Stomach (tissue), 19 donors: ENCODE measurements at regions of chr13 and their contacts with region 1.

Region 1: DNA sequence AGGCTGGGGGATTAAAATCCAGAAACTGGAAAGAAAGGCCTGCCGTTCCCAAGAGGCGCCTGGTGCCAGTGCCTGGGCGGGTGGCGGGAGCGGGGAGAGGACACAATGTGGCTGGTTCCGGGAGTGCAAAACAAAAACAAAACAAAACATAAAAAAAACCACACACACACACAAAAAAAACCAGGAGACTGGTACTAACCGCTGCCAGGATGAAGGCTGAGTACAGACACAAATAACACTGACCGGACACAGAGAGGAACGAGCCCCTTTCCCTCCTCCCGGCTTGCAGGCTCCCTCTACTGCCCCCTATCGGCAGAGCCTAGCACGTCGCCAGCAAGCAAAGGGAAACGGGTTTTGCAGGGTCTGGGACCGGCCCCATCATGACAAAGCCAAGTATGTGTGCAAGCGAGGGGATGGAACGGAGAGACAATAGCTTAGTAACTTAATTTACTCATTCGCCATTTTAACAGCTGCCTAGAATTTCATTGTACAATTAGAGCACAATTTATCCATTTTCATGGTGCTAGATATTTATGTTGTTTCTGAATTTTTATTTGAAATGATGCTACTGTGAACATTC is 17.9 kb upstream of the ZDHHC20 start:
- DNase-seq: peak; percentile 89 to 95
- H3K4me3 ChIP-seq: peak overlapping the region; percentile 31 to 37 (median 35)
- H3K27ac ChIP-seq: peak overlapping the region; percentile 28 to 77 (median 70)
- H3K4me1 ChIP-seq: peaks cover 0 to 24% (median 11%) of the 10 kb centered on the region in 4 donors
- H3K27me3 ChIP-seq: no peaks in the 10 kb centered on the region
- CTCF ChIP-seq: peak in 6 of 7 experiments; percentile 58 to 96 (median 95)
- EP300 ChIP-seq: no peak
- POLR2A ChIP-seq: no peak

Region 2: GRCh38 chr13:20945952-20946383 is 531.0 kb before region 1 on chr13:
- intact Hi-C with region 1: loop called (anchors 10 kb)
- DNase-seq: peak in 1 of 2 donors; percentile 54
- H3K4me3 ChIP-seq: peak overlapping the region in 3 of 4 donors; percentile 19 to 26 (median 25)
- H3K27ac ChIP-seq: no peak overlapping the region
- H3K4me1 ChIP-seq: peaks cover 7 to 21% (median 13%) of the 10 kb centered on the region in 4 donors
- H3K27me3 ChIP-seq: peaks cover 0 to 17% (median 10%) of the 10 kb centered on the region in 3 donors
- CTCF ChIP-seq: no peak
- EP300 ChIP-seq: no peak
- POLR2A ChIP-seq: no peak

Region 3: GRCh38 chr13:21106089-21106488 is 370.9 kb before region 1 on chr13:
- intact Hi-C with region 1: loop called (anchors 10 kb)
- DNase-seq: peak in 1 of 2 donors; percentile 32
- H3K4me3 ChIP-seq: no peak overlapping the region
- H3K27ac ChIP-seq: no peak overlapping the region
- H3K4me1 ChIP-seq: no peaks in the 10 kb centered on the region
- H3K27me3 ChIP-seq: no peaks in the 10 kb centered on the region
- CTCF ChIP-seq: no peak
- EP300 ChIP-seq: no peak
- POLR2A ChIP-seq: no peak

Region 4: DNA sequence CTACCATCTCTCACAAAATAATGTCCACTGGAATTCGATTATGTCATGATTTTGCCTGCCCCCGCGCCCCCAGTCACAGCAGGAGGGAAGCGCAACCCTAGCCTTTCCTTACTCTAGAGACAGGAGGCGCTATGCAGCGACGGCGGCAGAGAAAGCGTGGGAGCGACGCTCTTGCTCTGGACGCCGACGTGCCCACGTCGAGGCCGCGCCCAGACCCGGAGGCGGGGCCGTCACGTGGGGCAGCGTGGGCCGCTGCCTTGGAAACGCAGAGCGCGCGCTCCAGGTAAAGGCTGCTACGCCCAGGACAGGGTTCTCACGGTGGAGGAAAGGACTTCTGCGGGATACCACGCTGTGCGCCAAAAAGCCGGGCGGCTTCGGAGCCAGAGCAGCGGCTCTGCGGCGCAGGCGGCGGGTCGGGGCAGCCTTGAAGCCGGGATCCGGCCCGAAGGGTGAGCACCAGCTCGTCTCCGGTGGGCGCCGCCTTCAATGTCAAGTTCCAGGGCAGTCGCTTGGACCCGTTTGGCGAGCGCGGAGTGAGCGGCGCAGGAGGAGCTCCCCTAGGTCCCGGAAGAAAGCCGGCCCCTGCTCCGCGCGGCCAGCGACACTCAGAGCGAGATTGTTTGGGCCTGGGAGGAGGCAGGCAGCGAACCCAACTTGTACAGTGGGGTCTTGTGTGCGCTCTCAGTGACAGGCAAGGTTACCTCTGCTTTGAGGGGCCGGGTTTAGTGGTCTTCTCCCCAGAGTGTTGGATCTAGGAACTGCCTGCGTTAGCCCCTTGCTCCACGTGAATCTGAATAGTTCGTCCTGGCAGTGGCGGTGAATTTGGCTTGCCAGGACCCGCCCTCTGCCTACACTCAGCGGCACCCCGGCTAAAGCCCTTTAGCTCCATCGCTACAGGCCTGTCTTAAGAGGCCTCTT is 178.8 kb before region 1 on chr13:
- intact Hi-C with region 1: loop called (anchors 10 kb)
- DNase-seq: peak; percentile 86 to 97
- H3K4me3 ChIP-seq: peak overlapping the region; percentile 83 to 96 (median 88)
- H3K27ac ChIP-seq: peak overlapping the region; percentile 72 to 88 (median 78)
- H3K4me1 ChIP-seq: peaks cover 15 to 38% (median 27%) of the 10 kb centered on the region in 4 donors
- H3K27me3 ChIP-seq: no peaks in the 10 kb centered on the region
- CTCF ChIP-seq: peak in 5 of 7 experiments; percentile 68 to 95 (median 90)
- EP300 ChIP-seq: no peak
- POLR2A ChIP-seq: no peak

Region 5: DNA sequence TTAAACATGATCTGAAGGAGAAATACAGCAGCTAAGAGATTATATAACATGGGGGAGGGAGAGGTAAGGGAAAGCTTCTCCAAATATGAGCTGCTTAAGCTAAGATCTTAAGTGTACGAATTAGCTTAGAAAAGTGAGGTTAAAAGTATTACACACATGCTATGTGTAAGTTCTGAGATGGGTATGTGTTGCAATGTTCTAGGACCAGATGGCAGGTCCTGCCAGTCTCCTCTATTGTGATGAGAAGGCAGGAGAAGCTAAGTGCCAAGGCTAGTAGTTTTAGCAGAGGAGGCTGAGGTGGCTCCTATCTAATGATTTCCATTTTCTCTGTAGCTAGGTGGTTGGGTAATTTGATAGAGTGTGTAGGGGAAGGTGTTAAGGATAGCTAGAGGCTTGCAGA is 69.4 kb after region 1 on chr13:
- intact Hi-C with region 1: no loop called
- DNase-seq: no peak
- H3K4me3 ChIP-seq: no peak overlapping the region
- H3K27ac ChIP-seq: no peak overlapping the region
- H3K4me1 ChIP-seq: peaks cover 0 to 11% (median 4%) of the 10 kb centered on the region in 4 donors
- H3K27me3 ChIP-seq: no peaks in the 10 kb centered on the region
- CTCF ChIP-seq: no peak
- EP300 ChIP-seq: no peak
- POLR2A ChIP-seq: no peak

Region 6: GRCh38 chr13:21657538-21657937 is 180.6 kb after region 1 on chr13:
- intact Hi-C with region 1: no loop called
- DNase-seq: no peak
- H3K4me3 ChIP-seq: no peak overlapping the region
- H3K27ac ChIP-seq: no peak overlapping the region
- H3K4me1 ChIP-seq: no peaks in the 10 kb centered on the region
- H3K27me3 ChIP-seq: peaks cover 0 to 33% (median 0%) of the 10 kb centered on the region in 3 donors
- CTCF ChIP-seq: no peak
- EP300 ChIP-seq: no peak
- POLR2A ChIP-seq: no peak